Sciatic nerve (tissue), 2 donors: ENCODE measurements at regions of chr2 and their contacts with region 1.

Region 1: DNA sequence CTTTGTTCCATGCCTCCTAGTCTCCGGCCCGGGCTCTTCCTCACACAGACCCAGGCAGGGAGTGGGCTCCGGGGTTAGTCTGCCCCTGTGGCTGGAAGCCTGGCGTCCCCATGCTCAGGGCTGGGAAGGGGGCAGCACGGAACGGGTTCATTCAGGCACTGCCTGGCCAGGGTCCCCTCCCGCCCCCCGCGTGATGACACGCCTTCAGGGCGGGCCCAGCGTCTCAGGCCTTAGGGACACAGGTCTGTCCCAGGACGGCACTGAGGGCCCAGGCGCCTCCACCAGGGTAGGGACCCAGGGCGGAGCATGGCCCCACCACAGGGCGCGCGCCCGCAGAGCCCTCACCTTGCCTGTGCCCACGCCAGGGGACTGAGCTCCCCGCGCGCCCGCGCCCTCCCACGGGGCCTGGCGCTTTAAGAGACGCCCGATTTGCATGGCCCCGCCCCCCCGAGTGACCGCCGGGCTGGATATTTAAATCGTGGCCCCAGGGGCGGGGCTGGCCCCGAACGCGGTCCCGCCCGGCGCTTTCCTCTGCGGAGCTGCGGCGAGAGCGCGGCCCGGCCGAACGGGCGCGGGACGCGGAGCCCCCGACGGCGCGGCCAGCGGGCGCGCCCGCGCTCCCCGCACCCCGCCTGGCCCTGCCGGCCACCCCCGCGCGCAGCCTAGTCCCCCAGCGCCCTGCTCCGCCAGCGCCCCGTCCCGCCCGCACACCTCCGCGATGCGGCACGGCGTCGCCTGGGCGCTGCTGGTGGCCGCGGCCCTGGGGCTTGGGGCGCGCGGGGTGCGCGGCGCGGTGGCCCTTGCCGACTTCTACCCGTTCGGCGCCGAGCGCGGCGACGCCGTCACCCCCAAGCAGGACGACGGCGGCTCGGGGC is at the start of gene SNED1:
- DNase-seq: peak; percentile 93
- ATAC-seq: peak; percentile 81
- total RNA-seq, gene SNED1: 148 TPM

Region 2: GRCh38 chr2:240556553-240557100 is 441.7 kb before region 1 on chr2:
- intact Hi-C with region 1: no loop called
- DNase-seq: no peak
- ATAC-seq: no peak

Region 3: DNA sequence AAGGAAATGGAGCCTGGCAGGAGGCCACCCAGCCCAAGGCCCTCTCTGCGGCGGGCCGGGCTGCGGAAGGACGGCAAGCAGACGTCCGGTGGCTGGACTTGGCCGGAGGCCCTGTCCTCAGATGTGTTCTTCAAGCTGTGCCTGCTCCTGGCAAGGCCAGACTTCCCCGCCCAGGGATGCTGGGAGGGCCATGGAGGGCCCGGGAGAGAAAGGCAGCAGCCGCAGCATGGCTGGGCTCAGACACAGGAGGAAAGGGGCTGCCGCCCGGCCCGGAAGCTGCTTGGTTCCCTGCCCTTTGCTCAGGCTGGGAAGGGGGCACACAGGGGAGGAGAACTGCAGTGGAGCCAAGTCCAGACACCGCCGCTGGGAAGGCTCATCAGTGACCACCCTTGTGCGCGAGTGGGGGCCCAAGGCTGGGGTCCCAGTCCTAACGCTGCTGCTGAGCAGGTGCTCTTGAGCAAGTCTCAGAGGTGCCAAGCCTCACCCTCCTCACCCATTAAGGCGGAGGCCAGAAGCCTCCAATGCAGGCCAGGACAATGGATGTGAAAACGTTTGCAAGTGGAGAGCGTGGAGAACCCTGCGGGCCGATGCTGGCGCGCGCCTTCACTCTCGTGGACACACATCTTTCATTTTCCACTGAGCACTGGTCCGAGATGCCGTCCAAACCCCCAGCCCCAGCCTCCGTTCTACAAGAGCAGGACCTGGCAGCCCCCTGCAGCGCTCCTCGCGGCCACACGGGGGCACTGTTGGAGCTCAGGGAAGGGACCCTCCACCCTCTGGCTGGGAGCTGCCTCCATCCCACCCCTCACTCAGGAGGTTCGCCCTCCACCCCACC is 84.3 kb before region 1 on chr2:
- intact Hi-C with region 1: loop called (anchors 10 kb)
- DNase-seq: peak; percentile 90
- ATAC-seq: peak; percentile 78

Region 4: GRCh38 chr2:241720560-241720959 is 722.2 kb after region 1 on chr2:
- intact Hi-C with region 1: no loop called
- DNase-seq: no peak
- ATAC-seq: no peak